Activated T-helper 2 cell treated with anti-CD3 and anti-CD28 coated beads, Interferon-gamma antibody, Interleukin-2, Interleukin-4, amounts not matched to agents 10 μg/mL and 5 μg/mL and 100 μg/mL, durations not matched to agents 14 hours and 24 hours and 36 hours (primary cell): ENCODE measurements at regions of chr7 and their contacts with region 1.

Region 1: DNA sequence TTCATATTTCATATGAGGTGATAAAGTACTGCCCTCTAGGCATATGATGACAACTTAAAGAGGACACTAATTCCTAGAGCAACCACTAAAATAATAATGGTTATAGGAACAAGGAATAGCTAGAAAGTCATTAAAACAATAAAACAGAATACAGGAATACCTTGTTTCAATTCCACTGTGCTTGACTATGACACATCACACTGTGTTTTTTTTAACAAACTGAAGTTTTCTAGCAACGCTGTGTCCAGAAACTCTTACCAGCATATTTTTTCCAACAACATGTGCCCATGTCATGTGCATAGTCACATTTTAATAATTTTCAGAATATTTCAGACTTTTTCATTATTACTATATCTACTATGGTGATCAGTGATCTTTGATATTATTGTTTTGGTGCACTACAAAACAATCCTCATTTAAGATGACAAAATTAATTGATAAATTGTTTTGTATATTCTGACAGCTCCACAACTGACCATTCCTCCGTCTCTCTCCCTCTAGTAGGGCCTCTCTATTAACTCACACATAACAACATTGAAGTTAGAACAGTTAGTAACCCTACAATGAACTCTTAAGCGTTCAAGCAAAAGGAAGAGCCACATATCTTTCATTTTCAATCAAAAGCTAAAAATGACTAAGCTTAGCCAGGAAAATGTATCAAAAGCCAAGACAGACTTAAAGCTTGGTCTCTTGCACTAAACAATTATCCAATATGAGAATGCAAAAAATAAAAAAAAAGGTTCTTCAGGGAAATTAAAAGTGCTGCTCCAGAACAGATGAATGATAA is 85.8 kb downstream of the SNX13 start:
- DNase-seq: no peak
- H3K4me3 Mint-ChIP-seq: peak overlapping the region; percentile 43
- H3K27ac Mint-ChIP-seq: peak overlapping the region; percentile 67
- H3K4me1 Mint-ChIP-seq: peaks cover 36% of the 10 kb centered on the region
- H3K27me3 Mint-ChIP-seq: no peaks in the 10 kb centered on the region

Region 2: GRCh38 chr7:16926283-16926682 is 928.2 kb before region 1 on chr7:
- intact Hi-C with region 1: loop called (anchors 10 kb)
- DNase-seq: no peak
- H3K4me3 Mint-ChIP-seq: no peak overlapping the region
- H3K27ac Mint-ChIP-seq: peak overlapping the region; percentile 43
- H3K4me1 Mint-ChIP-seq: peaks cover 62% of the 10 kb centered on the region
- H3K27me3 Mint-ChIP-seq: no peaks in the 10 kb centered on the region

Region 3: GRCh38 chr7:17934094-17934493 is 79.6 kb after region 1 on chr7:
- intact Hi-C with region 1: loop called (anchors 5 kb)
- DNase-seq: no peak
- H3K4me3 Mint-ChIP-seq: no peak overlapping the region
- H3K27ac Mint-ChIP-seq: no peak overlapping the region
- H3K4me1 Mint-ChIP-seq: peaks cover 54% of the 10 kb centered on the region
- H3K27me3 Mint-ChIP-seq: peaks cover 7% of the 10 kb centered on the region